A549 (cell line): ENCODE measurements at regions of chr1 and their contacts with region 1.

Region 1: GRCh38 chr1:41282679-41283317 is 40.7 kb upstream of the SCMH1 start:
- DNase-seq: peak; percentile 20 to 45
- ATAC-seq: peak; percentile 73 to 90; a peak in 5 of 6 replicates
- H3K4me3 ChIP-seq: no peak overlapping the region
- H3K27ac ChIP-seq: no peak overlapping the region
- H3K4me1 ChIP-seq: no peaks in the 10 kb centered on the region
- CTCF ChIP-seq: peak; percentile 64
- EP300 ChIP-seq: no peak
- POLR2A ChIP-seq: no peak
- RAD21 ChIP-seq: peak; percentile 71 to 72

Region 2: GRCh38 chr1:41268154-41268770 is 14.5 kb before region 1 on chr1:
- CTCF ChIA-PET with region 1: interaction called, 12 read pairs
- POLR2A ChIA-PET with region 1: no interaction called
- DNase-seq: peak; percentile 64 to 77
- ATAC-seq: peak; percentile 67 to 94
- H3K4me3 ChIP-seq: no peak overlapping the region
- H3K27ac ChIP-seq: peak overlapping the region; percentile 34 to 48; a peak in 2 of 6 replicates
- H3K4me1 ChIP-seq: peaks cover 3% of the 10 kb centered on the region; the same call in 1 of the 3 replicates
- CTCF ChIP-seq: peak; percentile 84
- EP300 ChIP-seq: no peak
- POLR2A ChIP-seq: no peak
- RAD21 ChIP-seq: peak; percentile 90 to 91

Region 3: DNA sequence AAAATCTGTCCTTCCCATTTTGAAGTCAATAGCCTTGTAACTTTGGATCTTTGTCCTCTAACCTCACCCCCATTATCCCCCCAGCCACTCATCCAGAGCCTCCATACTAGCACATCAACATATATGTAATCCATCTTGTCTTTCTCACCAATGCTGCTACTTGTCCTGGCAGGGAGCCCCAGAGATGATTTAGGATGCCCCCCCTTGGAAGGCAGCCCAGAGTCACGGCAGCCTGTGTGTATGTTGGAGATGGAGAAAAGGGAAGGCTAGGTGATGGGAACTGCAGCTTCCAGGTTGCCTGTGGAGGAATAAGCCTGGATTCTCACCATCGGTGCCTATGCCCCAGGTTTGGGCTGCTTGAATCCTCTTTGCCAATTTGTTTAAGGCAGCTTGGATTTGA is 11.0 kb after region 1 on chr1:
- CTCF ChIA-PET with region 1: interaction called, 12 read pairs
- POLR2A ChIA-PET with region 1: no interaction called
- DNase-seq: no peak
- ATAC-seq: no peak
- H3K4me3 ChIP-seq: no peak overlapping the region
- H3K27ac ChIP-seq: no peak overlapping the region
- H3K4me1 ChIP-seq: no peaks in the 10 kb centered on the region
- CTCF ChIP-seq: no peak
- EP300 ChIP-seq: no peak
- POLR2A ChIP-seq: no peak
- RAD21 ChIP-seq: no peak

Region 4: GRCh38 chr1:41313661-41314131 is 30.9 kb after region 1 on chr1:
- CTCF ChIA-PET with region 1: interaction called, 20 read pairs
- POLR2A ChIA-PET with region 1: no interaction called
- DNase-seq: peak in 1 of 2 experiments; percentile 20
- ATAC-seq: peak in 1 of 2 experiments; percentile 75; a peak in 3 of 6 replicates
- H3K4me3 ChIP-seq: no peak overlapping the region
- H3K27ac ChIP-seq: no peak overlapping the region
- H3K4me1 ChIP-seq: 0 out of 3 replicates have a peak, but pooled peaks cover 5% of the 10 kb centered on the region
- CTCF ChIP-seq: peak; percentile 32
- EP300 ChIP-seq: no peak
- POLR2A ChIP-seq: no peak
- RAD21 ChIP-seq: 0 out of 5 replicates have a peak, but pooled peaks of 1 of the 2 experiments have one; percentile 24

Region 5: DNA sequence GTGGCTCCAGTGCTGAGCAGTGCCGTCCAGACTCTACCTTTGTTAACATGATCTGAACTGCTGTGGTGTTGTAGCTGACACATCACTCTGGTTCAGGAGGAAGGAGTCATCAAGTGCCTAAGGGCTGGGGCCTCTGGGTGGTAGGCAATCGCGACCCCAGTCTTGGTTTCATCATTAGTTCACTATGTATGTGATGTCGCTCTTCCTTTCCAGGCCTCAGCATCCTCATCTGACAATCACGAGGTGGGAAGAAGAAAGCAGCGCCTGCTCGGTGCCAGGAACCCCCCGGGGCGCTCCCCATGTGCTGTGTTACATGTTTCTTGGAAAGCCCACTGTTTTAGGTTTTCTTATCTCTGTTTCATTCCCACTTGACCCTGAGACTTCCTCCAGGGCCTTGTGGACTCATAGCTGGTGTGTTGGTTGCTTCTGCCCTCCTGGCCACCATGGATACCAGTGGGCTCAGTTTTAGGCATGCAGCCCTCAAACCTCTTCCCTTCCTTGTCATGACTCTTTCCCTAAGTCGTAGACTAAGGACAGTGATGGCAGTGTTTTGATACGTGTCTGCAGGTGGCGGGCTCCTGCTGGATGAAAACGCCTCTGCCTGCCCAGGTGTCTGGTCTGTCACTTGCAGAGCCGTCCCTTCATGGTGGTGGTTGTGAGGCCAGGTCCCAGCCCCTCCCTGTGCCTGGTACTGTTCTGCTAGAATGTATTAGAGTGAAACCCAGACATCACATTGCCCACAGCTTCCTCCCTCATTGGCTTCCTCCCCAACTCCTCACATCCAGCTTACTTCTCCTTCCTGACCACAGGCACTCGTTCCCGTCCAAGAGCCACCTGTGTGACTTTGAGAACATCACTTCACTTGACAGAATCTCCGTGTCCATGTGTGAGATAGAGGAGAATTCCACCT is 61.2 kb after region 1 on chr1:
- CTCF ChIA-PET with region 1: no interaction called
- POLR2A ChIA-PET with region 1: no interaction called
- DNase-seq: no peak
- ATAC-seq: no peak
- H3K4me3 ChIP-seq: no peak overlapping the region
- H3K27ac ChIP-seq: no peak overlapping the region
- H3K4me1 ChIP-seq: peaks cover 12% of the 10 kb centered on the region; the same call in 1 of the 3 replicates
- CTCF ChIP-seq: no peak
- EP300 ChIP-seq: no peak
- POLR2A ChIP-seq: no peak
- RAD21 ChIP-seq: no peak

Region 6: DNA sequence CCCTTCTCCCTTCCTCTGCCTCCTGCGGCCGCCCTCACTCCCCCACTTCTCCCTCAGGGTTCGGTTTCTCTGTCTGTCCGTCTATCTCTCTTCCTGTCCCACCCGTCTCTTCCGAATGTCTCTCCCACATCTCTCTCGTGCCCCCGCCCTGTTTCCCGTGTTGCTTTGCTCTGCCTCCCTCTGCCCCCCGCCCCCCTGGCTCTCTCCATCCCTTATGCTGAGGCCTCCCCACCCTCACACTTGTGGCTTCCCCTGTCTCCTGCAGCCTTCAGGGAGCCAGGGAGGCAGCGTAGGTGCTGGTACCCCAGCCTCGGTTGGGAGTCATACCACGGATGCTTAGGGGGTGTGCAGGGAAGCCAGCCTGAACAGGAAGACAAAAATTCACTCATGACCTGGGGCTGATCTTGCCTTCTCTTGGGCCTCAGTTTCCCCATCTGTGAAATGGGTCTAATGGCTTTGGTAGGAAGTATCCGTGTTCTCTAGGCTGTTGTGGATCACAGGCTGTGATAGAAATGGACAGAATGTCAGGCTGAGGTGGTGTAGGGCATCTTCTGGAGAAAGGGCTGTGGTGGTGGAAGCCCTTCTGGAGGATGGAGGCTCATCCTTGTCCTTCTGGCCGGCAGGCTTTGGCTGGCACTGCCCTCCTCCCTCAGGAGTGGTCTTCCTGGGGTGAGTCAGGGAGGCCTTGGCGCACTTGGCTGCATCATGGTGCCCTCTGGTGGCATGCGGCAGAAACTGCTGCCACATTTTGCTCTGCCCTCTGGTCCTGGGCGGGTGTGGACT is 133.9 kb after region 1 on chr1:
- CTCF ChIA-PET with region 1: interaction called, 146 read pairs
- POLR2A ChIA-PET with region 1: no interaction called
- DNase-seq: peak; percentile 70 to 76
- ATAC-seq: peak; percentile 69 to 88; a peak in 5 of 6 replicates
- H3K4me3 ChIP-seq: no peak overlapping the region
- H3K27ac ChIP-seq: 0 out of 6 replicates have a peak overlapping the region, but pooled peaks of 1 of the 2 experiments have one; percentile 6
- H3K4me1 ChIP-seq: peaks cover 15% of the 10 kb centered on the region
- CTCF ChIP-seq: peak; percentile 73
- EP300 ChIP-seq: no peak
- POLR2A ChIP-seq: no peak
- RAD21 ChIP-seq: peak; percentile 84 to 91

Region 7: DNA sequence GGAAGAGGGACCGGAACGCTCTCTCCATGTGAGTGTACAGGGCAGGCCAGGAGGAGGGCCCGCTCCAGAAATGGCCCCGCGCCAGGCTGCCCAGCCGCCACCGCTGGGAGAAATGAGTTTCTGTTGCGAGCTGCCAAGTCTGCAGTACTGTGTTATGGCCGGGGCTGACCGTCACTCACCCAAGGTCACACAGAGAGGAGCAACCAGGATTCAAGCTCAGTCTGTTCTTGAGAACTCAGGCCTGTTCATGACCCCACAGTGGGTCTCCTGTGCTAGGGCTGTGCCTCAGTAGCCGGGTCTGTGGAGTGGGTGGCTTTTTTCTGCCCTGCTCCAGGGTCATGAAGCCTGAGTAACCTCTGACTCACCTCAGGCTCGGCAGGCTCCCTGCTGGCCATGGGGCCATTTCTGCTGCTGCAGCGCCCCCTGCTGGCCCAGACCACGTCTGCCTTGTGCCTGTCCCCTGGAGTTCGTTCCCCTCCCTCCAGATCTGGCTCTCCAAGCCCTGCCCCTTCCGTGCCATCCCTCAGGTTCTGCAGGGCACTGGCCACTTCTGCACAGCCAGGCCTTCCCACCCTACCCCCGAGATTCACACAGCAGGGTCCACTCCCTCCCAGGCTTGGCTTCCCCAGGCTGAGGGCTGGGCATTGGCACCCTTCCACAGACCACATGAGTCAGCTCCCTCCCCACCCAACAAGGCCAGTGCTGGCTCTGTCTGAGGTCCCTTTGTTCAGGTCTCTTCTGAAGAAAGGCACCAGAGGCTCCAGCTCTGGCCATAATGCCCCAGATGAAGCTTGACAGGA is 149.9 kb after region 1 on chr1:
- CTCF ChIA-PET with region 1: interaction called, 25 read pairs
- POLR2A ChIA-PET with region 1: no interaction called
- DNase-seq: peak; percentile 87
- ATAC-seq: peak; percentile 91 to 98
- H3K4me3 ChIP-seq: 0 out of 3 replicates have a peak overlapping the region, but pooled peaks have one; percentile 15
- H3K27ac ChIP-seq: peak overlapping the region; percentile 80 to 90
- H3K4me1 ChIP-seq: peaks cover 23% of the 10 kb centered on the region
- CTCF ChIP-seq: peak; percentile 92
- EP300 ChIP-seq: no peak
- POLR2A ChIP-seq: no peak
- RAD21 ChIP-seq: peak; percentile 92 to 93

Region 8: DNA sequence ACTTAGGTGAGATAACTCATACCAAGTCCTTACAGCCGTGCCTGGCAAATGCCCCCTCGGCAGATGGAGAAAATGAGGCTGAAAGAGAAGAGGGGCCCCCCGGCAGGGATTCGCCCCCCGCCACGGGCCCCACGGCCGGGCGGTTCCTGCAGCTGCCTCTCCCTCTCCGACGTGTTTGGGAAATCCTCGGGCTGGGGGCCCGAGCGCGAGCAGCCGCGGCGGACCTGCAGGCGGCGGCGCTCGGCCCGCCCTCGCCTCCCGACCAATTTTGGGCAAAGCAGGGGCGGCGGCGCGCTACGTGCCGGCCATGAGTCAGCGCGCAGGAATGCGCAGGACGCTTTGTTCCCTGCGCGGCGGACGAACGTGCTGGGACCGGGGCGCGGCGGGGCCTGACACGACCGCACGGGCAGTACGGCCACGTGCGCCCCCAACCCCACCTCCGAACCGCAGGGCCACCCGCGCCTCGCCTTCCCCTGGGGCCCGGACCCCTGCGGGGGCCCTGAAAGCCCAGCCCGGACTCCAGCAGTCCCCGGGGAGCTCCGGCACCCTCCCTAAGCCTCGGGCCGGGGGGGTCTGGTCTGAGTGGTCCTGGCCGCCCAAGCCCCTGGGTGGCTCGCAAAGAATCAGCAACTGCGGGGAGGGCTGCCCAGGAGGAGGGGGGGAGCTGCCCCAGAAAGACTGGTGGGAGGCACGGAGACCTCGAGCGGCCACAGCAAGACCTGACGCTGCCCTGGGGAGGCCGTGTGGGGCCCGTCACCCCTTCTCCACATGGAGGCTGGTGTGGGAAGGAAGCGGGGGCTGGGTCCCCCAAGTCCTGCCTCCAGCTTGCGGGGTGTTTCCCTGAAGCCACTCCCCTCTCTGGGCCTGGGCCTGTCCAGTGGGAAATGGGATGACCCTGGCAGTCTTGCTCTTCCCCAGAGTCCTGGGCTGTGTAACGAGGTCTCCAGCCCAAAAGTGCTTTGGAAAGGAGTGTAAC is 213.6 kb after region 1 on chr1:
- CTCF ChIA-PET with region 1: interaction called, 10 read pairs
- POLR2A ChIA-PET with region 1: no interaction called
- DNase-seq: peak in 1 of 2 experiments; percentile 82
- ATAC-seq: peak; percentile 57 to 70
- H3K4me3 ChIP-seq: peak overlapping the region; percentile 33
- H3K27ac ChIP-seq: peak overlapping the region; percentile 82 to 100
- H3K4me1 ChIP-seq: peaks cover 90% of the 10 kb centered on the region
- CTCF ChIP-seq: no peak
- EP300 ChIP-seq: no peak; a peak in 1 of 5 replicates
- POLR2A ChIP-seq: no peak
- RAD21 ChIP-seq: no peak